Transverse colon (tissue), 4 donors: ENCODE measurements at regions of chr11 and their contacts with region 1.

Region 1: GRCh38 chr11:119728651-119729580 is at the start of gene NECTIN1:
- DNase-seq: peak; percentile 91
- H3K4me3 ChIP-seq: peak within 1 kb of the TSS; percentile 65 to 91 (median 80)
- H3K27ac ChIP-seq: peak within 1 kb of the TSS; percentile 91 to 97 (median 93)
- H3K4me1 ChIP-seq: peaks cover 11 to 40% (median 31%) of the 10 kb centered on the region in 4 donors
- H3K27me3 ChIP-seq: no peaks in the 10 kb centered on the region
- CTCF ChIP-seq: peak; percentile 91 to 99 (median 98)
- EP300 ChIP-seq: no peak
- POLR2A ChIP-seq: peak; percentile 69
- total RNA-seq, gene NECTIN1: 11.0 to 71.2 (median 12.6) TPM

Region 2: DNA sequence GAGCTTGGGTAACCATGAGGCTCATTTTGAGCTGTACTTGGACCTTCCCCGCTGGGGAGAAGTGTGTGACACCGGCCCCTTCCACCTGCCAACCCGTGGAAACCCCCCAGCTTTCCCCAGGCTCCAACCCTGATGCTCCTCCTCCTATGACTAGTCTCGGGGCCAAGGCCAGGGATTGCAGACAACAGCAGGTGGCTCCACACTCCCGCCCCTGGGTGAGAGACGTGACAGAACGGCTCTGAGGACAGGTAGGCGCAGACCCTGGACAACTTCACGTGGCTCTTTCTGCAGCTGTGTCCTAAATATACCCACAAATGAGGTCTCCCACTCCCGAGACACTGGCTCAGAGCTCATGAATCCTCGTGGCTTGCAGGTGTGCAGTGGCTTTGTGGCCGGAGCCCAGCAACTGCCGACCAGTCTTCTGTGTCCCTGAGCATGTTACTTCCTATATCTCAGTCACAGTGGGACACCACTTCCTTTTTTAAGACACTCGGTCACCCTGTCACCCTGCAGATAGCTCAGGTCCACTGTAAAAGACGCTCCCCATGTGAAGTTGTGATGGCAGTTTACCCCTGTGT is 55.1 kb before region 1 on chr11:
- in situ Hi-C with region 1: loop called in 2 of 4 experiments (anchors 10 kb)
- intact Hi-C with region 1: no loop called
- DNase-seq: peak; percentile 46
- H3K4me3 ChIP-seq: no peak overlapping the region
- H3K27ac ChIP-seq: no peak overlapping the region
- H3K4me1 ChIP-seq: peaks cover 0 to 16% (median 8%) of the 10 kb centered on the region in 4 donors
- H3K27me3 ChIP-seq: no peaks in the 10 kb centered on the region
- CTCF ChIP-seq: peak in 1 of 5 experiments; percentile 8
- EP300 ChIP-seq: no peak
- POLR2A ChIP-seq: no peak